BJ (cell line): ENCODE measurements at regions of chr14 and their contacts with region 1.

Region 1: GRCh38 chr14:54683882-54684794 is 117.2 kb downstream of the SAMD4A start:
- DNase-seq: peak; percentile 84
- H3K4me3 ChIP-seq: no peak overlapping the region
- H3K27me3 ChIP-seq: no peaks in the 10 kb centered on the region
- CTCF ChIP-seq: no peak

Region 2: DNA sequence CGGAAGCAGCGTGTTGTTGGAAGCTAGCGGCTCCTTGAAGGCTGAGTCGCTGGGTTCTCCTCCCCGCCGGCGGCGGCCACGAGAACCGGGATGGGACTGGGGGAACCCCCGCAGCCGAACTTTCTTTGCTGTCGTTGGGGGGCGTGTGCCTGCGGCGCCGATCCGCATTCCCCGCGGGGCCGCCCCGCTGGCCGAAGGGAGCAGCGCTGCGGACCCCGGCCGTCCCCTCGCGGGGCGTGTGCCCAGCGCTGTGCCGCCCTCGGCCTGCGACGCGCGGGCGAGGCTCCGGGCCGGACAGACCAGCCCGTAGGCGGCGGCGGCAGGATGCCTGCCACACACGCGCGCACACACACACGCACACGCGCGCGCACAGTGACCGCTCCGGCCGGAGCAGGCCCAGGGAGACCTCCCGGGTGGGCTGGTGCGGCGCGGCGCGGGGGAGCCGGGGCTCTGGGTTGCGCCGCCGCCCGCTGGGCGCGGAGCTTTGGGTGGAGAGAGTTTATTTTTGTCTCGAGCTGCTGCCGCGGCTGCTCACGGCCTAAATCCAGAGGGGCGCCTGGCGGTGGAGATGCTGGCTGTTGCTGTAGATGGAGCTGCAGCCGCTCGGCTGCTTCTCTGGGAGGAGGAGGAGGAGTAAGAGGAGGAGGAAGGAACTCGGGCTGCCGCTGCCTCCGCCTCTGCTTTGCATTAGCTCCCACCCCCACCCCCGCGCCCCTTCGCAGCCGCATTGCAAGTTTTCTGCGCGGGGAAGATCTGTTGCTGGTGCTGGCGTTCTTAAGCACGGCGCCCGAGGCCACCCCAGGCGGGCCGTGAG is 117.5 kb before region 1 on chr14 and contains the start of gene SAMD4A:
- CTCF ChIA-PET with region 1: interaction called, 17 read pairs
- POLR2A ChIA-PET with region 1: interaction called, 7 read pairs
- DNase-seq: no peak
- H3K4me3 ChIP-seq: peak within 1 kb of the TSS; percentile 86
- H3K27me3 ChIP-seq: no peaks in the 10 kb centered on the region
- CTCF ChIP-seq: peak; percentile 46; the same call in 1 of the 2 replicates
- polyA plus RNA-seq, gene SAMD4A: 13.4 and 16.9 TPM in 2 replicates

Region 3: DNA sequence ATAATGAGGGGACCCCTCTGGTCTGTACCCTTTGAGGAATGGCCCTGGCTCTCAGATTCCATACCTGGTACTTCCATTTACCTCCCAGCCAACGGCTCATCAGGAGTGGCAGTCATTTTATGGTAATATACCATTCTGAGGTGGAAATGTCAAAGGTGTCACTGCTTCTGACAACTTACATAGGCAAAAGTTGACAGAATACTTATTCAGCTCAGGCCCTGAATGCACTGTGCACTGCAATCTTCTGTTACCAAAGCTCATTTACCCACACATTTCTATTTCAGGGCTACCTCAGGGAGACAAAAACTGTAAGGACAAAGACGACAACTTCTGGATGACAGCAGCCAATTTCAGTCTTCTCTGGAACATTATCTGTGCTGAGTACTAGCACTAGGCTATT is 1683.3 kb after region 1 on chr14:
- CTCF ChIA-PET with region 1: no interaction called
- POLR2A ChIA-PET with region 1: interaction called, 12 read pairs
- DNase-seq: no peak
- H3K4me3 ChIP-seq: no peak overlapping the region
- H3K27me3 ChIP-seq: no peaks in the 10 kb centered on the region; the same call in 1 of the 2 replicates
- CTCF ChIP-seq: no peak